Heart left ventricle (tissue), 16 donors: ENCODE measurements at regions of chr19 and their contacts with region 1.

Region 1: GRCh38 chr19:46299004-46299509 is 2.2 kb downstream of the HIF3A start:
- DNase-seq: peak; percentile 96 to 98 (median 97)
- ATAC-seq: peak; percentile 70 to 82 (median 72)
- H3K4me3 ChIP-seq: peak overlapping the region; percentile 42 to 79 (median 68)
- H3K27ac ChIP-seq: peak overlapping the region; percentile 88 to 99 (median 98)
- H3K4me1 ChIP-seq: peaks cover 7 to 67% (median 55%) of the 10 kb centered on the region in 12 donors
- H3K27me3 ChIP-seq: peaks cover 0 to 6% (median 0%) of the 10 kb centered on the region in 9 donors
- CTCF ChIP-seq: no peak
- POLR2A ChIP-seq: peak in 1 of 2 donors; percentile 42

Region 2: DNA sequence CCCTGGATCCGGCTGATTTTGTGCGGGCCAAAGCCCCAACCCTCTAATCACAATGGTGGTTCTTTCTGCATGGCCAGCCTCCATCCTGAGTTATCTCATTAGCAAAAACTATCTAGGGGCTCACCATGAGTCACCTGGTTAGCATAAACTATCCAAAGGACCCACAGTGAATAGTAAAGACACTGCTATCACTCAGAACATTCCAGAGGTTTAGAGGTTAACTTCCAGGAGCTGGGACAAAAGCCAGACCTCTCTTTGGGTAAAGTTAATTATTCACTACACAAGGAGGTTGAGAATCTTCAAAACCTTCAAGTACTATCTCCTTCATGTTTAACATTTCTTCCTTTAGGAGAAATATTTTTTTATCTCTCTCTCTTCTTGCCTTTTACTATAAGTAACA is 29.0 kb after region 1 on chr19:
- intact Hi-C with region 1: loop called in 1 of 10 experiments (anchors 2 kb)
- DNase-seq: no peak
- ATAC-seq: no peak
- H3K4me3 ChIP-seq: no peak overlapping the region
- H3K27ac ChIP-seq: no peak overlapping the region
- H3K4me1 ChIP-seq: peaks cover 0 to 4% (median 0%) of the 10 kb centered on the region in 12 donors
- H3K27me3 ChIP-seq: no peaks in the 10 kb centered on the region
- CTCF ChIP-seq: no peak
- POLR2A ChIP-seq: no peak

Region 3: GRCh38 chr19:46346821-46347571 is 47.9 kb after region 1 on chr19 and contains the start of gene PPP5C:
- intact Hi-C with region 1: loop called in 3 of 10 experiments (anchors 2 to 5 kb)
- DNase-seq: peak; percentile 92 to 97 (median 96)
- ATAC-seq: peak; percentile 48 to 83 (median 81)
- H3K4me3 ChIP-seq: peak within 1 kb of the TSS; percentile 70 to 100 (median 96)
- H3K27ac ChIP-seq: peak within 1 kb of the TSS; percentile 52 to 96 (median 90)
- H3K4me1 ChIP-seq: peaks cover 7 to 56% (median 46%) of the 10 kb centered on the region in 12 donors
- H3K27me3 ChIP-seq: no peaks in the 10 kb centered on the region
- CTCF ChIP-seq: peak; percentile 29 to 78 (median 58)
- POLR2A ChIP-seq: peak in 1 of 2 donors; percentile 86
- total RNA-seq, gene PPP5C: 69.9 to 115 (median 77.1) TPM

Region 4: GRCh38 chr19:46373421-46374359 is 74.6 kb after region 1 on chr19:
- intact Hi-C with region 1: loop called in 1 of 10 experiments (anchors 10 kb)
- DNase-seq: peak; percentile 83 to 93 (median 88)
- ATAC-seq: peak; percentile 66 to 88 (median 80)
- H3K4me3 ChIP-seq: no peak overlapping the region
- H3K27ac ChIP-seq: peak overlapping the region in 11 of 12 donors; percentile 44 to 75 (median 59)
- H3K4me1 ChIP-seq: peaks cover 3 to 53% (median 38%) of the 10 kb centered on the region in 12 donors
- H3K27me3 ChIP-seq: no peaks in the 10 kb centered on the region
- CTCF ChIP-seq: no peak
- POLR2A ChIP-seq: no peak